MCF 10A (cell line): ENCODE measurements at regions of chr1 and their contacts with region 1.

Region 1: DNA sequence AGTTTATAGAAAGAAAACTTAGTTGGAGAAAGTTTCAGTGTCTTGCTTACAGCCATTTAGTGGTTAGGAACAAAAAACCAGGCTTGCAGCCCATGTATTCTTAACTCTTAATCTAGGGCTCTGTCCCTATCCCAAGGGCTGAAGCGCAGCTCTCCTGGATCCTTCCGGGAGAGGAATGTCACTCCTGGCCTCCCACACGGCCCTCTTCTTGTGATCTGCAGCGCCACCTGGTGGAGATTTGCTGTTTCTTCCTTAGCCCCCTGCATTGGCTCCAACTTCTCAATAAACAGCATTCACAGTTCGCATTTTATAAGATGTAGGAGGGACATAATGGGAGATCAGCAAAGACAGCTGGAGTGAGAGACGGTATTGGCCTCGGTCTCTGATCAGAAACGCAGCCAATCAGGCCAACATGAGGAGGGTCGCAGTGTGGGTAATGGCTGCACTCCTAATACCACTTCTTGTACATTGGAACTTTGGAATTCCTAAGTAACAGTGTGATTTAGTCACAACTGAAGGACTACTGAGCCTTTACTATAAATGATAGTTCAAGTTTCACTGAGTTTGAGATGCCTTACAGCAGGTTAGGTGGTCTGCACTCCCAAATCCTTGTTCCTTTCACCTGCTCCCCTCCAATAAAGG is 283.4 kb downstream of the ASTN1 start:
- DNase-seq: peak; percentile 90
- H3K4me3 Mint-ChIP-seq: no peak overlapping the region
- H3K27ac Mint-ChIP-seq: no peak overlapping the region
- H3K4me1 Mint-ChIP-seq: no peaks in the 10 kb centered on the region
- H3K27me3 Mint-ChIP-seq: peaks cover 12% of the 10 kb centered on the region
- CTCF ChIP-seq: peak; percentile 95

Region 2: GRCh38 chr1:176119549-176119948 is 761.5 kb before region 1 on chr1:
- CTCF ChIA-PET with region 1: no interaction called
- POLR2A ChIA-PET with region 1: no interaction called
- intact Hi-C with region 1: loop called (anchors 1 kb)
- DNase-seq: peak; percentile 47
- H3K4me3 Mint-ChIP-seq: no peak overlapping the region
- H3K27ac Mint-ChIP-seq: no peak overlapping the region
- H3K4me1 Mint-ChIP-seq: peaks cover 6% of the 10 kb centered on the region
- H3K27me3 Mint-ChIP-seq: no peaks in the 10 kb centered on the region
- CTCF ChIP-seq: peak; percentile 36

Region 3: GRCh38 chr1:176567190-176567794 is 313.8 kb before region 1 on chr1:
- CTCF ChIA-PET with region 1: interaction called, 152 read pairs
- POLR2A ChIA-PET with region 1: no interaction called
- intact Hi-C with region 1: no loop called
- DNase-seq: peak; percentile 47
- H3K4me3 Mint-ChIP-seq: no peak overlapping the region
- H3K27ac Mint-ChIP-seq: no peak overlapping the region
- H3K4me1 Mint-ChIP-seq: peaks cover 18% of the 10 kb centered on the region
- H3K27me3 Mint-ChIP-seq: no peaks in the 10 kb centered on the region
- CTCF ChIP-seq: no peak

Region 4: DNA sequence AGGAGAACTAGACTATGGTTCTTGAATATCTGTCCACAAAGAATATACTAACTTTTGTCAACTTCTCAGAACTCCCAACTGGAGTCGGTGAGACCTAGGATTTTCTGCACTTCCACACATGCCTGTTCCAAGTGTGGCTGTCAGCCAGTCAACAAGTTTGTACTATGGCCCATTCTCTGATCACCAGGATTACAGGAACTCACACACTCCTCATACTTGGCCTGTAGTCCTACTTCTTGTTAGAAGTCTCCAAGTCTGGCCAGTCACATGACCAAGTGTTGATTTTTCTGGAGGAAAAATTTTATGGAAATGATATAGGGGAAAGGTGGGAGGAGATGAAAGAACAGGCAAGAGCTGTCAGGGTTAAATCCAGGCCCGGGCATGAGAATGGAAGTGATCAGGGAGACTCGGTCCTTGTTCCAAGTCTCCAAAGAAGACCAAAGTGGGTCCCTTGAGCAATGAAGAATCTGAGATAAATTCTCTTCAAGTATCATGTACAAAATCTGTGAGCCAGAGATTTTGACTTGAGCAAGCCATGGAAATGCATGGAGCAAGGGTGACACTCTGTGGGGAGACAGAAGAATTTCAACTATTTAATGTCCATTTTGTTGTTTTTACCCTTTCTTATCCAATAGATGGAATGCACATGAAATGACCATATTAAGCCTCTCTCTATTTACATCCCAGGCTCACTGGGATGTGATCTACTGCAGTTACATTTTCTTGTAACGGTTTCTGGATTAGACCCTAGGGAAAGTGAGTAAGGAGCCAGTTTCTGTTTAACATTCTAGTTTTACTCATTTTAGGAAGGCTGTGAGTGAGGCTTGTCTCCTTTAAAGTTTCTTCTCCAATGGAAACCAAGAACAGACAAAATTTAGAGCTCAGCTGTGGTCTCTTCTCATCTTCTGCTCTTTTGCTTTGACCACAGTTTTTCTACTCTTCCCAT is 37.5 kb before region 1 on chr1:
- CTCF ChIA-PET with region 1: interaction called, 19 read pairs
- POLR2A ChIA-PET with region 1: no interaction called
- intact Hi-C with region 1: loop called (anchors 1 kb)
- DNase-seq: peak; percentile 53
- H3K4me3 Mint-ChIP-seq: no peak overlapping the region
- H3K27ac Mint-ChIP-seq: no peak overlapping the region
- H3K4me1 Mint-ChIP-seq: no peaks in the 10 kb centered on the region
- H3K27me3 Mint-ChIP-seq: no peaks in the 10 kb centered on the region
- CTCF ChIP-seq: peak; percentile 84

Region 5: DNA sequence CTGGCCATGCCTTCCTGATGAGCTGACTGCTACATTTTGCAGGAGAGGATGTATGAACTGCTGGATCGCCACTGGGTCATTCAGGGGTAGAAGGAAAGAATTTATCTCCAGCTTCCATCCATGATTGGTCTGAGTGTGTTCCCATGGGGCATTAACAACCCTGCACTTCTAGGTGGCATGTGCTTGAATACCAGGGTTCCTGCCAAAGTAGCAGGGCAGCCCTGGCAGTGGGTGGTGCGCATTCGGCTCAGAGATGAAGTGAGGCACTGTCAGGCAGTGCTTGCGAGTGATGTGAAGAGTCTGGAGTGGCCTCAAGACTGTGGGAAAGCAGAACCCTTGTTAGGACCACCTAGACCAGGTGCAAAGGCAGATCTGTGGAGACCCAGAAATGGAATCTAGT is 11.5 kb before region 1 on chr1:
- CTCF ChIA-PET with region 1: interaction called, 26 read pairs
- POLR2A ChIA-PET with region 1: no interaction called
- intact Hi-C with region 1: no loop called
- DNase-seq: no peak
- H3K4me3 Mint-ChIP-seq: no peak overlapping the region
- H3K27ac Mint-ChIP-seq: no peak overlapping the region
- H3K4me1 Mint-ChIP-seq: peaks cover 6% of the 10 kb centered on the region
- H3K27me3 Mint-ChIP-seq: no peaks in the 10 kb centered on the region
- CTCF ChIP-seq: no peak